ENCODE measurements at regions of chr11 and their contacts with region 1.

Region 1: GRCh38 chr11:44911029-44911814 is 39.5 kb downstream of the TP53I11 start:
- DNase-seq: peak; percentile 57
- ATAC-seq: peak; percentile 80
- H3K4me3 Mint-ChIP-seq: no peak overlapping the region
- H3K27ac Mint-ChIP-seq: no peak overlapping the region
- H3K4me1 Mint-ChIP-seq: peaks cover 20% of the 10 kb centered on the region
- H3K27me3 Mint-ChIP-seq: no peaks in the 10 kb centered on the region
- CTCF ChIP-seq: peak; percentile 39

Region 2: DNA sequence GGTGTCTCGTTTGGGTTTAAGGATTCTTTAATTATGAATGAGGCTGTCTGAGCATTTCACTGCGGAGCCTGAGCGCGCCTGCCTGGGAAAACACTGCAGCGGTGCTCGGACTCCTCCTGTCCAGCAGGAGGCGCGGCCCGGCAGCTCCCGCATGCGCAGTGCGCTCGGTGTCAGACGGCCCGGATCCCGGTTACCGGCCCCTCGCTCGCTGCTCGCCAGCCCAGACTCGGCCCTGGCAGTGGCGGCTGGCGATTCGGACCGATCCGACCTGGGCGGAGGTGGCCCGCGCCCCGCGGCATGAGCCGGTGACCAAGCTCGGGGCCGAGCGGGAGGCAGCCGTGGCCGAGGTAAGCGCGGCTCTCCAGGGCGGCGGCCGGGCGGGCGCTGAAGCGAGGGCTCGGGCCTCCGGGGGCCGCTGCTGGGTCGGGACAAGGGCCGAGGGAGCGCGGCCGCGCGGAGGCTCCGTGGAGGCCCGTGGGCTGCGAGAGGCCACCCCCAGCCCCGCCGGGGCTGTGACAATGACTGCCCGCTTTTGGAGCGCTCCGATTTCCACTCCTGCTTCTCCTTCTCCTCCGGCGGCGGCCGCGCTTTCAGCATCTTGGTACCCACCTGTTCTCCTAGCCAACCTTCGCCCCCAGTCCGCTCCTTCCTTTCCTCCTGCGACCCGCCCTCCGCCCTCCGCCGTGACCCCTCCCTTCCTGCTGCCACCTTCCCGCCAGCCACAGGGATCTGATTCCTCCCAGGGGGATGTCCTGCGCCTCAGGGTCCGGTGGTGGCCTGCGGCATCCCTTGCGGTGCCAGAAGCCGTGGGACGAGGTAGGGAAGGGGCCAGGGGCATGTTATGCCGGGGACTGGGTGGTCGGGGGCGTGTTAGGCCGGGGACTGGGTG is 815.5 kb before region 1 on chr11 and contains the start of gene EXT2:
- CTCF ChIA-PET with region 1: no interaction called
- POLR2A ChIA-PET with region 1: no interaction called
- intact Hi-C with region 1: loop called (anchors 5 kb)
- DNase-seq: peak; percentile 85
- ATAC-seq: peak; percentile 94
- H3K4me3 Mint-ChIP-seq: peak within 1 kb of the TSS; percentile 87
- H3K27ac Mint-ChIP-seq: no peak within 1 kb of the TSS
- H3K4me1 Mint-ChIP-seq: peaks cover 24% of the 10 kb centered on the region
- H3K27me3 Mint-ChIP-seq: no peaks in the 10 kb centered on the region
- CTCF ChIP-seq: no peak
- total RNA-seq, gene EXT2: 21.9 and 22.1 TPM in 2 replicates

Region 3: DNA sequence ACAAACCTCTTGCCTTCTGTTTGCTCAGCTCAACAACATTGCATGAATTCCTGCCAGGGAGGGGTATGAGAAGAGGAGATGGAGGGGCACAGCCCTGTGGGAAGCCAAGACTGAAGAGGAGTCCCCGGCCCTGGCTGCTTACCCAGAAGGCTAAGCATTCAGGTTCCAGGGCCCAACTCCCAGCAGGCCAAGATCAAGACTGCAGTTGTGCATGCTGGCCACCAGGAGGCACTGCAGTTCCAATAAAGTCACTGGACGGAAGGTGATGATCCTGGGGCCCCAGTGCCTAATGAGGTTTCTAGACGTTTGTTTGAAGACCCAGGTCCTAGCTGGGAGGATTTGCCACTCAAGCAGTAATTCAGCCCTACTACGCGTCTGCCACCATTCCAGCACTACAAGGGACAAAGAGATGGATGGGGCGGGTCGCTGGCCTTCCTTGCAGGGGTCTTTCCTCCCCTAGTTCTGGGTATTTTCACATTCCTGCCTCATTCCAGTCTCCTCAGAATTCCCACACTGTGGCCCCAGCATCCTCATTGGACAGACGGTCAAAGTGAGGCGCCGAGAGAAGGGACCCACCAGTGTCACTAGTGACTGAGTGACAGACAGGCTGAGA is 624.8 kb before region 1 on chr11:
- CTCF ChIA-PET with region 1: interaction called, 20 read pairs
- POLR2A ChIA-PET with region 1: no interaction called
- intact Hi-C with region 1: loop called (anchors 1 kb)
- DNase-seq: peak; percentile 55
- ATAC-seq: peak; percentile 79
- H3K4me3 Mint-ChIP-seq: no peak overlapping the region
- H3K27ac Mint-ChIP-seq: peak overlapping the region; percentile 16
- H3K4me1 Mint-ChIP-seq: no peaks in the 10 kb centered on the region
- H3K27me3 Mint-ChIP-seq: peaks cover 16% of the 10 kb centered on the region
- CTCF ChIP-seq: peak; percentile 44

Region 4: DNA sequence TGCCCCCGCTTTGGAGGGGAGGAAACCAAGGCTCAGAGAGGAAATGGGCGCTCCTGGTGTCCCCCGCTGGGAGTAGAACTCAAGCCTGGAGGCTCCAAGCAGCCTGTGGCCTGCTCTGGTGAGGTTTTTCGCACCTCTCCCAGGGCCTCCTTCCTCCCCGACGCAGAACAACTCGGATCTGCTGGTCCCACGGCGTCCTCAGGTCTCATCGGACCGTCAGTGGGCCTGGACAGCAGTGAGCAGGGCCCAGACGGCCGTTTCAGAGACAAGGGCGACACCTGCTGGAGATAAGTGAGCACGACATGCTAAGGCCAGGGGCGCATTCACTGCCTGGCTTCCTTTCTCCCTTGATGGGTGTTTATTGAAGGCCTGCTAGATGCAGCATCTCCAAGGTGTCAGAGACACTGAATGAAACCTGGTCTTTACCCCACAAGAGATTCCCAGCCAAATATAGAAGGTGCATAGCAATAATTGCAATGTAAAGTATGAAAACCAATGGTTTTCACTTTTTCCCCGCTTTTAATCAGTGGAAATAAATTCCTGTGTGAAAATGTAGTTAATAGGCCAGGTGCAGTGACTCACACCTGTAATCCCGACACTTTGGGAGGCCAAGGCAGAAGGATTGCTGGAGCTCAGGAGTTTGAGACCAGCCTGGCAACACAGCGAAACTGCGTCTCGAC is 372.7 kb before region 1 on chr11:
- CTCF ChIA-PET with region 1: interaction called, 4 read pairs
- POLR2A ChIA-PET with region 1: no interaction called
- intact Hi-C with region 1: loop called (anchors 5 kb)
- DNase-seq: peak; percentile 67
- ATAC-seq: peak; percentile 97
- H3K4me3 Mint-ChIP-seq: no peak overlapping the region
- H3K27ac Mint-ChIP-seq: no peak overlapping the region
- H3K4me1 Mint-ChIP-seq: peaks cover 3% of the 10 kb centered on the region
- H3K27me3 Mint-ChIP-seq: peaks cover 19% of the 10 kb centered on the region
- CTCF ChIP-seq: peak; percentile 37

Region 5: GRCh38 chr11:44634401-44635281 is 276.6 kb before region 1 on chr11:
- CTCF ChIA-PET with region 1: no interaction called
- POLR2A ChIA-PET with region 1: no interaction called
- intact Hi-C with region 1: loop called (anchors 1 kb)
- DNase-seq: no peak
- ATAC-seq: peak; percentile 60
- H3K4me3 Mint-ChIP-seq: no peak overlapping the region
- H3K27ac Mint-ChIP-seq: no peak overlapping the region
- H3K4me1 Mint-ChIP-seq: peaks cover 7% of the 10 kb centered on the region
- H3K27me3 Mint-ChIP-seq: peaks cover 23% of the 10 kb centered on the region
- CTCF ChIP-seq: no peak

Region 6: GRCh38 chr11:44775366-44775984 is 135.7 kb before region 1 on chr11:
- CTCF ChIA-PET with region 1: interaction called, 3 read pairs
- POLR2A ChIA-PET with region 1: no interaction called
- intact Hi-C with region 1: loop called (anchors 10 kb)
- DNase-seq: peak; percentile 37
- ATAC-seq: peak; percentile 64
- H3K4me3 Mint-ChIP-seq: no peak overlapping the region
- H3K27ac Mint-ChIP-seq: peak overlapping the region; percentile 4
- H3K4me1 Mint-ChIP-seq: peaks cover 3% of the 10 kb centered on the region
- H3K27me3 Mint-ChIP-seq: no peaks in the 10 kb centered on the region
- CTCF ChIP-seq: peak; percentile 51